Endothelial cell of umbilical vein (primary cell): ENCODE measurements at regions of chr20 and their contacts with region 1.

Region 1: DNA sequence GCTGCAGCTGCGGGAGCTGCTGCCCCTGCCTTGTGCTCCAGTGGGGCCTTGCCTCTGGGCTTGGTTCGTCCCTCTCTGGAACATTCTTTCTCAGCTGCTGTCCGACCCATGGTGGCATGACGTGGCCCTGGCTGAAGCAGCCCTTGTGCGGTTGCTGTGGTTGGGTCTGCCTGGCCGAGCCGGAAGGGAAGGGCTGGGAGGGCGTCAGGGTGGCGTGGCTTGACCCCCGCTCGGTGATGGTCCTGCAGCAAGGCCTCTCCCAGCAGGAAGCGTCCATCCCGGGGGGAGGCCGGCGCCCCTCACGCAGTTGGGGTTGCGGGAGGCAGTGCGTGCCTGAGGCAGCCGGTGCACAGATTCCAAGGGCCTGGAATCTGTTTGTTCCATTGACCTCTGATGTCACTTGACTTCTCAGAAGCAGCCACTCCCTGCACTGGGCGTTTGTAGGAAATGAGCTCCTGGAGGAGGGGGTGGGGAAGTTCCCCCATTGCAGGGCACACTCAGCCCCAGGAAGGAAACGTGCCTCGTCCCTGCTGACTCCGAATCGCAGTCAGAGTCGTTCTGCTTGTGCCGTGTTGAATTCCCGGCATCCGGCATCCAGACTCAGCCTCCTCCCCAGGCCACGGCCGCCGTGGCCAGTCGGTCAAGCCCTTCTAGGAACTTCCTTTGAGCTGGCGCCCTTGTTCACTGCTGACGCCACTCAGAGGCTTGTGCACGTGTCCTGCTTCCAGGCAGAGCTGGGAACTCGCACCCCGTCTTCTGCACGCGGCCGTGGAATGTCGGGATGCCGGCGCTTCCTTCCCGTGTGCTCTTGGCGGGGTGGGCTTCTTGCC is 9.7 kb upstream of the TNFRSF6B start:
- DNase-seq: peak; percentile 92
- H3K4me3 ChIP-seq: no peak overlapping the region
- H3K27ac ChIP-seq: peak overlapping the region; percentile 79
- H3K4me1 ChIP-seq: peaks cover 49% of the 10 kb centered on the region
- H3K27me3 ChIP-seq: no peaks in the 10 kb centered on the region
- CTCF ChIP-seq: no peak
- POLR2A ChIP-seq: peak; percentile 55

Region 2: DNA sequence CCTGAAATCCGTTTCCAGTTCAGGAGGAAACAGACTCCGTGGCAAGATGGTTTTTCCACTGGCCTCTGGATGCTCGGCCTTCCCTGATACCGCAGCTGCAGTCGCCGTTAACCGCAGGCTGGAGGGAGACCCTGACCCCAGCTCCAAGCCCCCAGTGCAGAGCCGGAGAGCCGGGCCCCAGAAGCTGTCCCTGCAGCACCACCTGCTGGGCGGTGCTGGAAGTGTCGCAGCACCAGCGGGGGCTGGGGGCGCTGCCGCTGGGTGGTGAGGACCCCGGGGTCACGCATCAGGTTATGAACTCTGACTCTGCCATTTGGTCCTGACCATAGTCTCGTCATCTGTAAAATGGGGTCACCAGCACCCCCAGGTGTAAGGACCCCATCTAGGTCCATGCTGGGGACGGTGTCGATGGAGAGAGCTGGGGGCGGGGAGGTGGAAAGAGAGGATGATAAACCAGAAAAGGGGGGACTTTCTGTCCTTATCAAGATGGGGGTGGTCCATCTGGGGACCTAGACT is 304.8 kb before region 1 on chr20:
- CTCF ChIA-PET with region 1: no interaction called
- POLR2A ChIA-PET with region 1: no interaction called
- dilution Hi-C with region 1: no loop called
- intact Hi-C with region 1: no loop called
- DNase-seq: peak; percentile 18
- H3K4me3 ChIP-seq: no peak overlapping the region
- H3K27ac ChIP-seq: no peak overlapping the region
- H3K4me1 ChIP-seq: no peaks in the 10 kb centered on the region
- H3K27me3 ChIP-seq: peaks cover 0 to 3% of the 10 kb centered on the region in 2 experiments
- CTCF ChIP-seq: peak; percentile 94 to 98
- POLR2A ChIP-seq: no peak

Region 3: GRCh38 chr20:63641792-63642544 is 44.7 kb before region 1 on chr20:
- CTCF ChIA-PET with region 1: interaction called, 13 read pairs
- POLR2A ChIA-PET with region 1: interaction called, 3 read pairs
- dilution Hi-C with region 1: no loop called
- intact Hi-C with region 1: no loop called
- DNase-seq: peak; percentile 57
- H3K4me3 ChIP-seq: peak overlapping the region; percentile 11 to 50 (median 20)
- H3K27ac ChIP-seq: no peak overlapping the region
- H3K4me1 ChIP-seq: peaks cover 2% of the 10 kb centered on the region
- H3K27me3 ChIP-seq: no peaks in the 10 kb centered on the region
- CTCF ChIP-seq: peak in 1 of 2 donors; percentile 37
- POLR2A ChIP-seq: no peak

Region 4: DNA sequence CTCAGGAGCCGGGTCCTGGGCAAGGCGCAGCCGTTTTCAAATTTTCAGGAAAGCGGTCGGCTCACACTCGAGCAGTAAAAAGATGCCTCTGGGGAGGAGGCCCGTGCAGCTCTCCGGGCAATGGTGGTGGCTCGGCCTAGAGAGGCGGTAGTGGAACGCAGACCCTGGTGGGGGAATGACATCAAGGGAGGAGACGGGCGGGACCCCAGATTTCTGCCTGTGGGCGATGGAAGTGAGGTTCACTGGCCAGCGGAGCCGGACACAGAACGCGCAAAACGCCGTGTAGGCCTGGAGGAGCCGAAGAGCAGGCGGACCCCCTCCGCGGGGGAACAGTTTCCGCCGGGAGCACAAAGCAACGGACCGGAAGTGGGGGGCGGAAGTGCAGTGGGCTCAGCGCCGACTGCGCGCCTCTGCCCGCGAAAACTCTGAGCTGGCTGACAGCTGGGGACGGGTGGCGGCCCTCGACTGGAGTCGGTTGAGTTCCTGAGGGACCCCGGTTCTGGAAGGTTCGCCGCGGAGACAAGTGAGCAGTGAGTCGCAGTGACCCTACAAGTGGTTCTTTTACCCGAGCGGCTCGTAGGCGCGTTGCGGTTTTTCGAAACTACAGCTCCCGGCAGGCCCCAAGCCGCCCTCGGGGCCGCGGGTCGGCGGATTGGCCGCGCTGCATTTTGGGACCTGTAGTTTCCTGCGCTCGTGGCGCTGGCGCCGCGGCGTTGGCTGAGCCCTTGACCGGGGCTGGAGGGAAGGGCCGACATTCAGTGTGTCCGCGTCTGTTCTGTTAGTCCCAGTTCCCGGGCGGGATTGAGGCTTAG is 28.6 kb before region 1 on chr20 and contains the start of gene RTEL1:
- CTCF ChIA-PET with region 1: interaction called, 17 read pairs
- POLR2A ChIA-PET with region 1: interaction called, 6 read pairs
- dilution Hi-C with region 1: no loop called
- intact Hi-C with region 1: loop called (anchors 1 kb)
- DNase-seq: peak; percentile 93
- H3K4me3 ChIP-seq: peak within 1 kb of the TSS; percentile 60 to 83 (median 62)
- H3K27ac ChIP-seq: peak within 1 kb of the TSS; percentile 50
- H3K4me1 ChIP-seq: peaks cover 10% of the 10 kb centered on the region
- H3K27me3 ChIP-seq: no peaks in the 10 kb centered on the region
- CTCF ChIP-seq: no peak
- POLR2A ChIP-seq: peak; percentile 54
- total RNA-seq, gene RTEL1: 38.6 and 44.9 TPM in 2 replicates